Posterior cingulate gyrus (tissue), 11 donors: ENCODE measurements at regions of chr9 and their contacts with region 1.

Region 1: DNA sequence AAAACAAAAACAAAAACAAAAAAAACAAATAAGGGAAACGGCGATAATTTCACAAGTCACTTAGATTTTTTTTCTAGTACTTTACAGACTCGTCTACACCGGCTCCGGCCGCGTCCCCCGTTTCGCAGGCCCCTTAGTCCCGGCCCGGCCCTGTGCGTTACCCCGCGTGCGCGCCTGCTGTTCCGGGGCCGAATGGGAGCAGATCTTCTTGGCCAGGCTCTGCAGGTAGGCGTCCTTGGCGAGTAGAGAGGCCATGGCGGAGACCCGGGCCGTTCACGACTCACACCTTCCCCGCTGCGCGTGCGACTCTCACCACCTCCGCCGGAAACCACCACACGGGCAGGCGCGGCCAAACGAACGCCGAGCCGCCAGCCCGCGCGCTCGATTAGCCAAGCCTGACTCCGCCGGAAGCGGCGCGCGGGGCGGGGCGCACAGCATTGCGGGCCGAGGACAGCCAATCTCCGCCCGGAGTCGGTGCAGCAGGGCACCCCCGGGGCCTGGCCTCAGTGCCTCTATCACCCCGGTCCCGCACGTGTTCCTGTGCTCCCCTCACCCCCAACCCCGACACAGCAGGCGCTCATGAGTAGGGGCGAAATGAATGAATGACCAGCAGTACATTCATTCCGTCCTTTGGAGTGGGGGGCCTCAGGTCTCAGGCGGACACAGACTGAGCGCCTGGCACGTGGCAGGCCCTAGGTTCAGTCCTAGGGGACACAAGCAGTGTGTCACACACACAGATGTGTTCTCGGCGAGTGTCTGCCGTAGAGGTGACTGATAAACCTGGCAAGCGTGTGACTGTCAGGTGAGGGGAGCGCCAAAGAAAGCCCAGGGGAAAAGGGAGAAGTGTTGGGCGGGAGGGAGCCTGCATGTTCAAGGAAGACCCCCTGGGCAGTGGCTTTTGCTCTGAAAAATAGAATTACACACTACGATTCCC is at the start of gene SURF6:
- DNase-seq: peak; percentile 85 to 98 (median 90)

Region 2: DNA sequence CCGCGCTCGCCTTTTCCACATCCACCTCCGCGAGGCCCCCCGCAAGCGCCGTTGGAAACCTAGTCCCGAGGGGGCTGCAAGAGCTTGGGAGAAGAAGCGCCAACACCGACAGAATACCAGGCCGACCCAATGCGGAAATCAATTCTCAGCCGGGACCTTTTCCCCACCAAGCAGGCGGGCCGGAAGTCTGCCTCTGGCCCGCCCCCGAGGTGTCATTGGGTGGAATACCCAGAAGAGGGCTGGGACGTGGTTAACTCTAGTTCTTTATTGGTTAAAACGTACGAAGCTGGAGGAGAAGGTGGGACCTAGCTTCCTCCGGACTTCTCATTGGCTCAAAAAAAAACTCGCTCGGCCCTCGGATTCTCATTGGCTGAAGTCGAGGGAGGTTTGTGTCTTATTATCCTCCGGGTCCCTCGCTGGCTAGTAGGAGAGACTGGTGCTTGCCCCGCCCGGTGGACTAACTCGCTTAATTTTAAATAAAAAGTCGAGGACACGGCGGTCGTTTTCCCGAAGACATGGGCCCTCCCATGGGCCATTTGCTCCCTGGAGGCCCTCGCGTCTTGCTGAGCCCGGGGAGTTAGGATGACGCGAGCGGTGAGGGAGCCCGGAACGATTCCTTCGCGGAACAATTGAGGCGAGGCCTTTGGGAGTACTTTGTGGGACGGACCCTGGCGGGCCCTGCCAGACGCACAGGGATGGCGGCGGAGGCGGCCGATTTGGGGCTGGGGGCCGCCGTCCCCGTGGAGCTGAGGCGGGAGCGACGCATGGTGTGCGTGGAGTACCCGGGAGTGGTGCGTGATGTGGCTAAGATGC is 305.6 kb before region 1 on chr9 and contains the start of gene GTF3C5:
- intact Hi-C with region 1: loop called (anchors 5 kb)
- DNase-seq: peak; percentile 89 to 99 (median 93)

Region 3: GRCh38 chr9:133375724-133376654 is 39.8 kb after region 1 on chr9 and contains the starts of genes STKLD1 and SURF4:
- intact Hi-C with region 1: loop called (anchors 1 kb)
- DNase-seq: peak; percentile 93 to 99 (median 96)

Region 4: GRCh38 chr9:133499132-133499891 is 163.2 kb after region 1 on chr9:
- intact Hi-C with region 1: no loop called
- DNase-seq: peak in 4 of 10 donors; percentile 3 to 74 (median 55)